ENCODE measurements at regions of chr2 and their contacts with region 1.

Region 1: DNA sequence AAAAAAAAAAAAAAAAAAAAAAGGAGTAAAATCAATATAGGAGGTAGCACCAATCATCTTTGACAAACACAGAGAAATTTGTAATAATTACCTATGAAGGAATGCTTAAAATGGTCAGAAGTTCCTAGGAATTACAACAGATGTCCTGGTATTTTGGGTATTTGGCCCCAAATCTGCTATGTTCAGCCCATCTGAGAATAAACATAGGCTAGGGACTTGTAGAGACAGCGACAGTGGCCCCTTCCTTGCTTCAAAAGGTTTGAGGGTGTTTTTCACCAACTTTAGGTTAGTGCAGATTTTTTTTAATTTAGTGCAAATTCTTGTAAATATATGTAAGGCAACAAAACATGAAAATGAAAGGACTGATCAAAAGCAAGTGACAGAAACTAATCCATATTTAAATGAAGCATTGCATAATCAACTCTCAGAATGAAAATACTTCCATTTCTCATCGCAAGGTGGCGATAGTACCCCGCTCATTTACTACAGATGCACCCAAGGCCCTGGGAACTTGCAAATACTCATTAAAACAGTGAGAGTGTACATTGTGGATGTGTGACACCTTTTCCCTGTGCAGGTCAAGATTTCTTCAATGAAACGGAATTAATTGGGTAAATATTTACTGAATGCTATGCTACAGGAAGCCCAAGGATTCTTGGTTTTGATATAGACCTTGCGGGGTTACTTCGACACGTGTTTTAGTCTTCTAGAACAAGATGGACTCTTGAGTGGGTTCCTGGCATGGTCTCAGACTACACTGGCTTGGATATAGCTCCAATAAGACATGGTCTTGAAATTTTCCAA is 44.6 kb downstream of the FAM124B start:
- DNase-seq: peak; percentile 51 to 57 (median 52)
- ATAC-seq: peak; percentile 88
- H3K4me3 ChIP-seq: no peak overlapping the region
- H3K27ac ChIP-seq: no peak overlapping the region
- H3K4me1 ChIP-seq: no peaks in the 10 kb centered on the region
- H3K27me3 ChIP-seq: peaks cover 0 to 16% of the 10 kb centered on the region in 2 experiments; a peak in 2 of 5 replicates
- CTCF ChIP-seq: peak; percentile 60 to 79 (median 64)
- EP300 ChIP-seq: no peak
- POLR2A ChIP-seq: no peak
- RAD21 ChIP-seq: peak; percentile 82 to 87

Region 2: GRCh38 chr2:224178056-224178455 is 179.2 kb before region 1 on chr2:
- CTCF ChIA-PET with region 1: no interaction called
- POLR2A ChIA-PET with region 1: no interaction called
- in situ Hi-C with region 1: no loop called
- intact Hi-C with region 1: no loop called
- DNase-seq: no peak
- ATAC-seq: no peak
- H3K4me3 ChIP-seq: no peak overlapping the region
- H3K27ac ChIP-seq: no peak overlapping the region
- H3K4me1 ChIP-seq: no peaks in the 10 kb centered on the region
- H3K27me3 ChIP-seq: no peaks in the 10 kb centered on the region
- CTCF ChIP-seq: no peak
- EP300 ChIP-seq: no peak
- POLR2A ChIP-seq: no peak
- RAD21 ChIP-seq: no peak

Region 3: DNA sequence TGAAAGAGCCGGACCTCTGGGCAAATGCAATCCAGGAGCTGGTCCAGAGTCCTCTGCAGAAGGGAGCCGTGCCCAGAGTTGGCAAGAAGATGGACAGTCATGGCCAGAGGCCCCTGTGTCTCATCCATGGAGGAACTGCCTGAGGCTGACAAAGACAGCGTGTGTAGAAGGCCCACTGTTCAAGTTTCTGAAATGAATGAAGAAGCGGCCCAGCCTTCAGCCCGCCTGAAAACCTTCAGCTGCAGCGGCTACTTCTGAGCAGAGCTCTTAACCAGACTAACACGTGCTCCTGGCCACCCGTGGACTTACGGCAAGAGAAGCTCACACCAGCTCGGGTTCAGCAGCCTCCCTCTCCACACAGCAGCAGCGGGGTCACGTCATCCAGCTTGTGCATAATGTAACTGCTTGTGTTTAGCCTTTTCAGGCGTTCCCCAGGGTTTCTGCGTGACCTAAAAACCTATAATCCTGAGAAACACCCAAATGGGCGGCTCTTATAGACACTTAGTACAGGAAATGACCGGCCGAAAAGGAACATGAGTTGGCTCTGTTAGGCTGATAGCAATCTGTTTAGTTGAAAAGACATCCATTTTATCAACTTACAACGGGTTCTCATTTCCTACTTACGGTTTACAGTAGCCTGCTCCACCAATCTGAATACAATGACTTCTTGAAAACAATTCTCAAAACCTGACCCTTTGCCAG is 44.5 kb after region 1 on chr2 and contains the start of gene FAM124B:
- CTCF ChIA-PET with region 1: no interaction called
- POLR2A ChIA-PET with region 1: no interaction called
- in situ Hi-C with region 1: no loop called
- intact Hi-C with region 1: loop called (anchors 2 kb)
- DNase-seq: peak; percentile 35 to 84 (median 42)
- ATAC-seq: peak; percentile 87
- H3K4me3 ChIP-seq: peak within 1 kb of the TSS; percentile 45
- H3K27ac ChIP-seq: peak within 1 kb of the TSS; percentile 95
- H3K4me1 ChIP-seq: peaks cover 0 to 4% of the 10 kb centered on the region in 2 experiments; a peak in 3 of 5 replicates
- H3K27me3 ChIP-seq: no peaks in the 10 kb centered on the region
- CTCF ChIP-seq: no peak
- EP300 ChIP-seq: peak; percentile 68; the same call in 1 of the 2 replicates
- POLR2A ChIP-seq: peak; percentile 79
- RAD21 ChIP-seq: no peak
- polyA plus RNA-seq, gene FAM124B: 15.5 to 21.4 TPM

Region 4: DNA sequence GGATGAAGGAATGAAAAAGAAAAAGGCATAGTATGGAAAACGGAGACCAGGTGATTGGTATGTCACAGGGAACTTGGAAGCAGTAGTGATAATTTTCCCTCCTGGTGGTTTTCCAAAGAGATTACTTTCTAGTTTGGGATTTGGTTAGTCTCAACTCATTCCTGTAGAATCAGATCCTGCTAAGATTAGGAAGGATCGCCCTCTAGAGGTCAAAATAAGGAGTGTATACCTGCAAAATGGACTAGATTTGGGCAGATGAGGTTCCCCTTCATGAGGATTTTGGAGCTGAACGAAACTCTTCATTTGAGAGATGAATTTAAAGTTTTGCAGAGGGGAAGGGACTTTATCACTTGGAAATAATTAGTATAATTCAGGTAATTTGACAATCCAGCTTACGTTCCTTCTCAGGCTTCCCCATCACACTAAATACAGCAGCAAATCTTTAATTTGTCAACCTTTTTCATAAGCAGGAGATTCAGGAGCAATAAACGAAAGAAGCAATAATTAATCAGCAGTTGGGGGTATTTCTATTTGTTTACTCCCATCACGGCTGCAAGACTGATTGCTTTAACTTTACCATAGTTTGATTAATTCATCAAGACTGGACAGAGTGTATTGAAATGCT is 293.6 kb after region 1 on chr2:
- CTCF ChIA-PET with region 1: interaction called, 10 read pairs
- POLR2A ChIA-PET with region 1: no interaction called
- in situ Hi-C with region 1: loop called (anchors 5 kb)
- intact Hi-C with region 1: loop called (anchors 1 kb)
- DNase-seq: peak; percentile 28 to 53 (median 33)
- ATAC-seq: peak; percentile 88
- H3K4me3 ChIP-seq: no peak overlapping the region
- H3K27ac ChIP-seq: no peak overlapping the region
- H3K4me1 ChIP-seq: no peaks in the 10 kb centered on the region; a peak in 1 of 5 replicates
- H3K27me3 ChIP-seq: no peaks in the 10 kb centered on the region
- CTCF ChIP-seq: peak; percentile 46 to 72 (median 63); a peak in 5 of 6 replicates
- EP300 ChIP-seq: no peak
- POLR2A ChIP-seq: no peak
- RAD21 ChIP-seq: peak; percentile 69 to 80

Region 5: GRCh38 chr2:225002039-225002655 is 644.8 kb after region 1 on chr2:
- CTCF ChIA-PET with region 1: no interaction called
- POLR2A ChIA-PET with region 1: no interaction called
- in situ Hi-C with region 1: no loop called
- intact Hi-C with region 1: loop called (anchors 10 kb)
- DNase-seq: peak; percentile 5 to 40 (median 20)
- ATAC-seq: no peak
- H3K4me3 ChIP-seq: no peak overlapping the region
- H3K27ac ChIP-seq: no peak overlapping the region
- H3K4me1 ChIP-seq: no peaks in the 10 kb centered on the region
- H3K27me3 ChIP-seq: no peaks in the 10 kb centered on the region
- CTCF ChIP-seq: peak in 2 of 3 experiments; percentile 37 to 50; a peak in 3 of 6 replicates
- EP300 ChIP-seq: no peak
- POLR2A ChIP-seq: no peak
- RAD21 ChIP-seq: peak; percentile 41 to 69; a peak in 3 of 4 replicates